Heart right ventricle (tissue), 16 donors: ENCODE measurements at regions of chr11 and their contacts with region 1.

Region 1: DNA sequence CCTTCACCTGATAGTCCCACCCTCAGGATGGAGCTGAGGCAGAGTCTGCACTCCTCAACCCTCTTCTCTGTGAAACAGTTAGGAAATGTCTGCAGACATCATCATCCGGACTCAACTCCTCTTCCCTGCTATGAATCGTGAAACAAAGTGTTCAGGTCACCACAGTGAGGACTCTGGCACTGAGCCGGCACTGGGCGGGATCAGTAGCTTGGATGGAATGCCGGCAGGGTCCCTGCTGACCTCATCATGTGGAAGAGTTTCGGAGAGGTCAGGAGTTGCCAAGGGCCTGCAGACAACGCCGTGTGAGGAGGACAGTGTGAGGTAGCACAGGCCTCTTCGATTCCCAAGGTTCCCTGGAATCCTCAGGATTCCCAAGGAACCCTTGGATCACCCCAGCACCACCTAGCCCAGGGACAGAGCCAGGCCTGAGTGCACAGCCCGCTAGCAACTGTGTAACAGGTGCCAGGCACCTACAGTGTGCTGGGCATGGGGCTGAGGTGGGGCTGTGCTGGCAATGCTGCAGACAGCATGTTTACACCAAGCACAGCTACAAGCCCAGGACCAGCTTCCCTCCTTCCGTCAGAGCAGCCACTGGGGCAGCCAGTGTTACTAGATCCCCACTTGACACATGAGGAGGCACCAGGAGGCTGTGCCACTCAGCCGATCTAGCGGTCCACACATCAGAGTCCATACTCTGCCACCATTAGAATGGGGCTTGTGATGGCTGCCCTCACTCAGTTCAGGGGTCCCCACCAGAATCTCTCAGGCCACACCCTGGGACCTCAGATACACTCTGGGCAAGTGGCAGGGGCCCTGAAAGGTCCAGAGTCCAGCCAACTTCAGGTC is 693 bp upstream of the LINC01488 start:
- DNase-seq: peak; percentile 66 to 74
- ATAC-seq: peak; percentile 16 to 73 (median 65)
- H3K4me3 ChIP-seq: no peak overlapping the region
- H3K27ac ChIP-seq: peak overlapping the region in 8 of 10 donors; percentile 64 to 82 (median 71)
- H3K4me1 ChIP-seq: peaks cover 14 to 36% (median 18%) of the 10 kb centered on the region in 9 donors
- H3K27me3 ChIP-seq: no peaks in the 10 kb centered on the region
- CTCF ChIP-seq: no peak

Region 2: DNA sequence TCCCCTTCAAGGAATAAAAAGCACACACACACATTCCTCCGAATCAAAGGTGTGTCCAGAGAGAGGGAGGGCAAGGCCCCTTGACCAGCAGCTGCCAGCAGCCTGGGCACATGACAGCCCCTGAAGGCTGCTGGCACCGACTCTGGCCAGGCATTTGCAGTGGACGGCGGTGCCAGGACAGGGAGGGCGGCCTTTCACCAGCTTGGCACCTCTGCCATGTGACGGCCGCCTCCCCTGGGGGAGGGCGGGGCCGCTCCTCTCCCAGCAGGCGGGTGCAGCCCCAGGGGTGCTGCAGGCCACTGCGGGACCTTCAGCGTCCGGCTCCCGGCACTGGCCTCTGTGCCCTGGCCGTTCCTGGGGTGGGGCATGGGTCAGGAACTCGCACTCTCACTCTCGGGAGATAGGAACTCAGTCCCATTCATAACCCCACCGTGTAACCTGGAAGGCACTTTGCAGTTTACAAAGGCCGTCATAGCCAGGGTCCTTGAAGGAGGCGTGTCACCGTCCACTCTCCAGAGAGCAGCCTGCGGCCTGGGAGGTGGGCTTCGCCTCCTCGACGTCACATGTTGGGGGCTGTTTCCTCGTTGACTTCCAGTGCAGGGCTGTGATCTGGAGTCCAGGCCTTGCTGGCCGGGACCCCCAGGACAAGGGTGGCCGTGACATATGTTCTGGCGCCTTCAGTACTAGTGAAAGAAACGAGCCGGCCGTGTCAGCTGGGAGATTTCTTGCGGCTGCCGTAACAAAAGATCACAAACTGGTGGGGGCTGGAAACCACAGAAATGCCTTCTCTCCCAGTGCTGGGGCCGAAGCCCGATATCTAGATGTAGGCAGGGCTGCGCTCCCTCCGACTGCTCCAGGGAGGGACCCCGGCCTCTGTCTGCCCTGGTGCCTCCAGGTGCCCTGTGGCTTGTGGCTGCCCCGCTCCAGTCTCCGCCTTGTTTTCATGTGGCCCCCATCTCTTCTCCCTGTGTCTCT is 364.9 kb before region 1 on chr11:
- intact Hi-C with region 1: loop called in 1 of 10 experiments (anchors 10 kb)
- DNase-seq: peak; percentile 70 to 73
- ATAC-seq: peak; percentile 84 to 97 (median 94)
- H3K4me3 ChIP-seq: peak overlapping the region in 2 of 10 donors; percentile 2 to 7
- H3K27ac ChIP-seq: peak overlapping the region in 7 of 10 donors; percentile 56 to 80 (median 70)
- H3K4me1 ChIP-seq: peaks cover 0 to 23% (median 9%) of the 10 kb centered on the region in 9 donors
- H3K27me3 ChIP-seq: no peaks in the 10 kb centered on the region
- CTCF ChIP-seq: no peak